Activated CD4-positive, alpha-beta memory T cell treated with anti-CD3 and anti-CD28 coated beads for 36 hours (primary cell): ENCODE measurements at regions of chr2 and their contacts with region 1.

Region 1: GRCh38 chr2:181457121-181457740 is at the start of gene ITGA4:
- DNase-seq: peak; percentile 90
- H3K4me3 Mint-ChIP-seq: peak within 1 kb of the TSS; percentile 88
- H3K27ac Mint-ChIP-seq: peak within 1 kb of the TSS; percentile 97
- H3K4me1 Mint-ChIP-seq: peaks cover 50% of the 10 kb centered on the region
- H3K27me3 Mint-ChIP-seq: no peaks in the 10 kb centered on the region
- total RNA-seq, gene ITGA4: 46.5 to 51.2 TPM

Region 2: GRCh38 chr2:181241797-181242196 is 215.4 kb before region 1 on chr2:
- CTCF ChIA-PET with region 1: no interaction called
- POLR2A ChIA-PET with region 1: no interaction called
- intact Hi-C with region 1: loop called (anchors 5 kb)
- DNase-seq: peak; percentile 46
- H3K4me3 Mint-ChIP-seq: no peak overlapping the region
- H3K27ac Mint-ChIP-seq: peak overlapping the region; percentile 77
- H3K4me1 Mint-ChIP-seq: peaks cover 32% of the 10 kb centered on the region
- H3K27me3 Mint-ChIP-seq: no peaks in the 10 kb centered on the region

Region 3: DNA sequence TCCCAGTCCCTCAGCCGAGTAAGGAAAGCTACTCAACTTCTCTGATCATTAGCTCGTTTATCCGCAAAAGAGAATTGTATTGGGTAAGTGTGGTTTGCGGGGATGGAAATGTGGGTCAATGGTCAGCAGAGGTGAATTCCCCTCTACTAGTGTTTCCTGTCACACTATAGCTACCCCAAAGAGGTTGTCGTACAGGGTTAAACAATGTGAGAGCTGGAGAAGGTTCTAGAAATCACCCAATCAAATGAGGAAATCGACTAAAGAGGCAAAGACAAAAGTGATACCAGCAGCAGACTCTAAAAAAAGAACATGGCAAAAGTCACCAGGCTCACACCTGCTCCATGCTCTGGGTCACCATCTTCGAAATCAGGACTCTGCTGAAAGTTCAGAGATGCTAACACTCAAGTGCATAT is 144.7 kb before region 1 on chr2:
- CTCF ChIA-PET with region 1: interaction called, 11 read pairs
- POLR2A ChIA-PET with region 1: interaction called, 16 read pairs
- intact Hi-C with region 1: no loop called
- DNase-seq: peak; percentile 68
- H3K4me3 Mint-ChIP-seq: peak overlapping the region; percentile 65
- H3K27ac Mint-ChIP-seq: peak overlapping the region; percentile 87
- H3K4me1 Mint-ChIP-seq: peaks cover 43% of the 10 kb centered on the region
- H3K27me3 Mint-ChIP-seq: no peaks in the 10 kb centered on the region

Region 4: DNA sequence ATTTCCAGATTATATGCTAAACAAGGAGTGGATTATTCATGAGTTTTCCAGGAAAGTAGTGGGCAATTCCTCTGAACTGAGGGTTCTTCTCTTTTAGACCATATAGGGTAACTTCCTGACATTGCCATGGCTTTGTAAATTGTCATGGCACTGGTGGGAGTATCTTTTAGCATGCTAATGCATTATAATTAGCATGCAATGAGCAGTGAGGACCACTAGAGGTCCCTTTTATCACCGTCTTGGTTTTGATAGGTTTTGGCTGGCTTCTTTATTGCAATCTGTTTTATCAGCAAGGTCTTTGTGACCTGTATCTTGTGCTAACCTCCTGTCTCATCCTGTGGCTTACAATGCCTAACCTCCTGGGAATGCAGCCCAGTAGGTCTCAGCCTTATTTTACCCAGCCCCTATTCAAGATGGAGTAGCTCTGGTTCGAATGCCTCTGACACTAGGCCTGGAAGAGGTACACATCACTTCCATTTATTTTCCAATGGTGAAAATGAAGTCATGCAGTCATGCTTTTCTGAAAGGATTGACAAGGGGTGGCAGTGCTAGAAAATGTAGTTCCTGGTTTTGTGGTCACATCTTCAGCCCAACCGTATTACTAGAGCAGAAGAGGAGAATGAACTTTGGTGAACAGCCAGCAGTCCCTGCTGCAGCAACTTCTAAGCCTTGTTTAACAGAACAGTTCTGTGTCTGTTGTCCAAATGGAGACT is 26.7 kb before region 1 on chr2:
- CTCF ChIA-PET with region 1: interaction called, 6 read pairs
- POLR2A ChIA-PET with region 1: no interaction called
- intact Hi-C with region 1: loop called (anchors 1 kb)
- DNase-seq: no peak
- H3K4me3 Mint-ChIP-seq: no peak overlapping the region
- H3K27ac Mint-ChIP-seq: peak overlapping the region; percentile 54
- H3K4me1 Mint-ChIP-seq: peaks cover 21% of the 10 kb centered on the region
- H3K27me3 Mint-ChIP-seq: no peaks in the 10 kb centered on the region

Region 5: DNA sequence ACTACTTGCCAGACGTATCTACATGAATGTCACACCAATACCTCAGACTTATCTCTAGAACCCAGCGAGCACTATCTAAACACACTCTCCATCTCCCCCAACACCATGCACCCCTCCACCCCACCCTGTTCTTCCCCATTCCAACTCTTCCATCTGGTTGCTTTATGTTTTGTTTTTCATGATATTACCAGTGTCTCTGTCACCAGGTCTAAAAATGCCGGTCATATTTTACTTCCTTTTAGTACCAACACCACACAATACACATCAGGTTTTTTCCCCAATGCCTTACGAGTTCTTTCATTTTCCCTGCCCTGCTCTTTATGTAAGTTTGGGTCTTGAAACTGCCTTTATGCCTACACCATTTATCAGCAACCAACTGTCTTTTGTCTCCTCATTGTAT is 10.2 kb before region 1 on chr2:
- CTCF ChIA-PET with region 1: interaction called, 7 read pairs
- POLR2A ChIA-PET with region 1: no interaction called
- intact Hi-C with region 1: loop called (anchors 1 kb)
- DNase-seq: no peak
- H3K4me3 Mint-ChIP-seq: no peak overlapping the region
- H3K27ac Mint-ChIP-seq: no peak overlapping the region
- H3K4me1 Mint-ChIP-seq: peaks cover 9% of the 10 kb centered on the region
- H3K27me3 Mint-ChIP-seq: no peaks in the 10 kb centered on the region